OCI-LY7 (cell line): ENCODE measurements at regions of chr10 and their contacts with region 1.

Region 1: DNA sequence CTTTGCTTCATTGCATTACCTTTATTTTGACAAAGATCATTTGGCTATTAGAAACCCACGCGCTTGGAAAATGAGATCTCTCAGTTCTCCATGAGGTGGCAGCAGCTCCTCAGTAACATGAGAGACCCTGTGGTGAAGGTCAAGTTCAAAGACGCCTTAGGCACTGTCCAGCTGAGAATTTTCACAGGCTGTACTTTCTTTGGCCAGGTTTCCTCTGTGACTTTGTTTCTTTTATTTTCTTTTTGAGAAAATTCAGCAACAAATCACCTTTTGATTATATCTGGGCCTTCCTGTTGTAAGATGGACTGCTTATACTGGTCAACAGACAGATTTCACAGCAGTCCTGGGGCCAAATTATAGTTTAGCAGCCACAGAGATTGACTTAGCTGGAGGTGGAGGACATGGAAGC is 54.5 kb downstream of the RAB18 start:
- DNase-seq: peak; percentile 68
- H3K4me3 ChIP-seq: no peak overlapping the region
- H3K27ac ChIP-seq: no peak overlapping the region
- H3K4me1 ChIP-seq: no peaks in the 10 kb centered on the region
- CTCF ChIP-seq: peak; percentile 86

Region 2: DNA sequence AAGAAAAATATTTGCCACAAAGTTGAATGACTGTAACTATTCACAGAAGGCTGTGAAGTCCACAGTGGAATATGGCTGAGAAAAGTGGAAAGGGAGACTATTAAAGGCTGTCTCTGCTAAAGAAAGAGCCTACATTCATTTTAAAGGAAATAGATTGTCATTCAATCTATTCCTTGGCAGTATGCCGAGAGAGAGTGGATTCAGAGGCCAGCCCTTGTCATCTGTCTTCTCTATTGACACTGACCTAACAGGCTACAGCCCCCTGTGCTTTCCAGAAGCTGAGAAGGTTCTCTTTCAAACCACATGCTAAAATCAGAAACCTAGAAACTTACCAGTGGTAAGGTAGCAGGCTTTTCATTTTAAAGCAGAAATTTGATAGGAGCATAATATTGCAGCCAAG is 428.2 kb after region 1 on chr10:
- CTCF ChIA-PET with region 1: no interaction called
- POLR2A ChIA-PET with region 1: no interaction called
- intact Hi-C with region 1: no loop called
- DNase-seq: no peak
- H3K4me3 ChIP-seq: no peak overlapping the region
- H3K27ac ChIP-seq: no peak overlapping the region
- H3K4me1 ChIP-seq: no peaks in the 10 kb centered on the region
- CTCF ChIP-seq: no peak

Region 3: DNA sequence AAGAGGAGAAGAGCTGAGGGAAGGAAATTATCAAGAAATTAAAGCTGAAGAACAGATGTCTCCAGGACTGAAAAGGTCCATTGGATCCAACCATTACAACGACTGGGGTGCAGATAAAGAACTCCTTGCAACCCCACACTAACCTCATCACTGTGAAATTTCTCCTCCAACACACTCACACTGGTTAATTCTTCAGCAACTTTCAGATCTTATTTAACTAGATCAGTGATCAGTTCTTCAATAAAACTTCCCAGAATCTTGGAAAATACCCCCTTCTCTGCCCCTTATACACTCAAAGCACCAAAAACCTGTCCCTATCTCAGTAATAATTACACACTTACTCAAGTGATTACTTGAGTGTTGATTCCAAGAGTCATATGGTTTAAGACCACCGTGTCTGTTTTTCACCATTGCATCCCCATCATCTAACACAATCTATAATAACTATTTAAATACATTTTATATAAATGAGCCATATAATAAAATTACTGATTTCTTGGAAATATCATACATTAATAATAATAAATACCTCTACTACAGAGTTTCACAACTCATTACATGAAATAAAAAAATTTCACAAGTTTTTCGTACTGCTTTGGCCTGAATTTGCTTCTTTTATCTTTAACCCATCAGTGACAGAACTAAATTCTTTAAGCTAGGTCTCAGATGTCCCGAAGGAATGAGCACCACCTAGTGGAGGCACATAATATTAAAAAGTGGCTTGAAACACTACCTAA is 620.6 kb after region 1 on chr10:
- CTCF ChIA-PET with region 1: no interaction called
- POLR2A ChIA-PET with region 1: no interaction called
- intact Hi-C with region 1: loop called (anchors 2 kb)
- DNase-seq: peak; percentile 66
- H3K4me3 ChIP-seq: no peak overlapping the region
- H3K27ac ChIP-seq: no peak overlapping the region
- H3K4me1 ChIP-seq: peaks cover 36% of the 10 kb centered on the region
- CTCF ChIP-seq: peak; percentile 98

Region 4: DNA sequence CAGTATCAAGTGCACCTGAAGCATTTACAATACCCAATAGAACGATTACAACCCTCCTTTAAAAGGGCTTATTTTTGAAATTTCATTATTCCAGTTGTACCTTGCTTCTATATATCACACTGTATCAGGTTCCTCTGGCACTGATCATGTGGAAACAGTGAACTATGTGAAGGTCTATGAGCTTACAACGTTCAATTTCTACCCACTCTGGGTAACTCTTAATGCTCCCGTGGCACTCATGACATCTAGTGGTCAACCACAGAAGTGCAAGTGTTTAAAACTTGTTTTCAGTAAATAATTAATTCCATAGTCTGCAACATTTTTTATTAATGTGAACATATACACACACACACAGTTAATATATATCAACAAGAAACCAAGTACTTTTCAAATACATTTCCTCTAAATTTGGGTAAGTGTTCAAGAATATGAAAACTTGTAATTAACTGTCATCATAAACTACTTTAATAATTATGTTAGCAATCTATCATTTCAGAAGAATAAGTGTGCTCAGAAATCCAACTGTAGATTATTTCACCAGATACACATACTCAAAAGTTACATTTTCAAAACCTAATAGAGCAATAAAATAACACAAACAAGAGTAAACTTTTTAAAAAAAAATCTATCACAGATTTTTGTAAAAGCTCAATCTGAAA is 683.3 kb after region 1 on chr10:
- CTCF ChIA-PET with region 1: no interaction called
- POLR2A ChIA-PET with region 1: no interaction called
- intact Hi-C with region 1: loop called (anchors 2 kb)
- DNase-seq: peak; percentile 62
- H3K4me3 ChIP-seq: no peak overlapping the region
- H3K27ac ChIP-seq: no peak overlapping the region
- H3K4me1 ChIP-seq: peaks cover 12% of the 10 kb centered on the region
- CTCF ChIP-seq: peak; percentile 99